ENCODE measurements at regions of chr13 and their contacts with region 1.

Region 1: GRCh38 chr13:107867701-107868661 is 347.4 kb downstream of the LIG4 start:
- DNase-seq: no peak
- ATAC-seq: peak; percentile 84
- H3K4me3 ChIP-seq: peak overlapping the region; percentile 46 to 48
- H3K27ac ChIP-seq: no peak overlapping the region
- H3K4me1 ChIP-seq: no peaks in the 10 kb centered on the region
- H3K27me3 ChIP-seq: no peaks in the 10 kb centered on the region; the same call in none of the 2 replicates
- CTCF ChIP-seq: peak; percentile 67

Region 2: GRCh38 chr13:107205303-107206104 is 662.5 kb before region 1 on chr13:
- CTCF ChIA-PET with region 1: no interaction called
- POLR2A ChIA-PET with region 1: no interaction called
- in situ Hi-C with region 1: no loop called
- intact Hi-C with region 1: loop called (anchors 5 kb)
- DNase-seq: peak; percentile 25
- ATAC-seq: peak; percentile 84
- H3K4me3 ChIP-seq: no peak overlapping the region
- H3K27ac ChIP-seq: no peak overlapping the region
- H3K4me1 ChIP-seq: no peaks in the 10 kb centered on the region
- H3K27me3 ChIP-seq: no peaks in the 10 kb centered on the region
- CTCF ChIP-seq: peak; percentile 85

Region 3: DNA sequence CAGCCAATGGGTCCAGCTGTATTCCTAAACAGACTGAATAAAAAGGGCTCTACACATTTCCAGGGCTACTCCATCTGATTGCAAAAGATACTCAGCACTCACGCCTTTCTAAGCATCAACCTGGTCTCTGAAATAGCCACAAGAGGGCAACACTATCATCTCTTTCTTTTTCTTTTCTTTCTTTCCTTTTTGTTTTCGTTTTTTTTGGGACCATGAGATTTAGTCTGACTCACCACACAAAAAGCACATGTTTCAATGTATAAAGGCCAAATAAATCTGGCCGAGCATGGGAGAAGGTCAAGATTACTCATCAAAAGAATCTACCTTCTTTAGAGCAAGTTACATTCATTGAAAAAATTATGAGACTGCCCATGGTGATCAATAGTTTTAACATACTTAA is 494.4 kb before region 1 on chr13:
- CTCF ChIA-PET with region 1: no interaction called
- POLR2A ChIA-PET with region 1: no interaction called
- in situ Hi-C with region 1: no loop called
- intact Hi-C with region 1: loop called (anchors 10 kb)
- DNase-seq: no peak
- ATAC-seq: no peak
- H3K4me3 ChIP-seq: no peak overlapping the region
- H3K27ac ChIP-seq: no peak overlapping the region
- H3K4me1 ChIP-seq: no peaks in the 10 kb centered on the region
- H3K27me3 ChIP-seq: no peaks in the 10 kb centered on the region
- CTCF ChIP-seq: peak; percentile 34; the same call in 1 of the 2 replicates

Region 4: DNA sequence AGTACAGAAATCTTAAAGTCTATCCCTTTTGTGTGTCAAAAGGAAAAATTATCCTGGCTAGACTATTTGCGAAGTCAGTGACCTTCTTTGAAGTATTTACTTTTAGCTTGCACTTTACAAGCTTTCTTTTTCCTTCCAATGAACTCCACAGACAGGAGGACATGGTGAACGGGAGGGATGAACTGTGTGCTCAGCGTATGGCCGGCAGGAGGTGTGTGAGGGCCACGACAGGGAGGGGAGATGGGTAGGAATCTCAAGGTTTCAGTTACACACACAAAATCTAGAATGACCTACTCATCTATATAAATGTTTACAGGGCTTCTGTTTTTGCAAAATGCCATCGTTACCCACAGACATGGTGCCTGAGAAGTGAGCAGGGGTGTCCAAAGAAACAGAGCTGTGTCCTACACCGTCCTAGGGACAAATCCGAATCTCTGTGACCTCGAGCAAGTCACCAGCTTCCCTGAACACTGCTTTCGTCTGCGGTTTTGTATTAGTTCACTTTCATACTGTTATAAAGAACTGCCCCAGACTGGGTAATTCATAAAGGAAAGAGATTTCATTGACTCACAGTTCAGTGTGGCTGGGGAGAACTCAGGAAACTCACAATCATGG is 189.8 kb before region 1 on chr13:
- CTCF ChIA-PET with region 1: no interaction called
- POLR2A ChIA-PET with region 1: no interaction called
- in situ Hi-C with region 1: no loop called
- intact Hi-C with region 1: loop called (anchors 10 kb)
- DNase-seq: no peak
- ATAC-seq: no peak
- H3K4me3 ChIP-seq: no peak overlapping the region
- H3K27ac ChIP-seq: no peak overlapping the region
- H3K4me1 ChIP-seq: no peaks in the 10 kb centered on the region
- H3K27me3 ChIP-seq: no peaks in the 10 kb centered on the region
- CTCF ChIP-seq: no peak; the same call in 1 of the 2 replicates

Region 5: GRCh38 chr13:108020027-108020426 is 152.0 kb after region 1 on chr13:
- CTCF ChIA-PET with region 1: no interaction called
- POLR2A ChIA-PET with region 1: no interaction called
- in situ Hi-C with region 1: no loop called
- intact Hi-C with region 1: no loop called
- DNase-seq: no peak
- ATAC-seq: no peak
- H3K4me3 ChIP-seq: no peak overlapping the region
- H3K27ac ChIP-seq: no peak overlapping the region
- H3K4me1 ChIP-seq: no peaks in the 10 kb centered on the region
- H3K27me3 ChIP-seq: no peaks in the 10 kb centered on the region
- CTCF ChIP-seq: no peak